Heart left ventricle (tissue), 16 donors: ENCODE measurements at regions of chr15 and their contacts with region 1.

Region 1: GRCh38 chr15:64067564-64068030 is 21.3 kb upstream of the DAPK2 start:
- DNase-seq: peak in 4 of 5 donors; percentile 51 to 60 (median 54)
- ATAC-seq: peak; percentile 60 to 79 (median 77)
- H3K4me3 ChIP-seq: no peak overlapping the region
- H3K27ac ChIP-seq: no peak overlapping the region
- H3K4me1 ChIP-seq: peaks cover 3 to 51% (median 18%) of the 10 kb centered on the region in 12 donors
- H3K27me3 ChIP-seq: no peaks in the 10 kb centered on the region
- CTCF ChIP-seq: peak; percentile 71 to 88 (median 83)
- POLR2A ChIP-seq: no peak

Region 2: DNA sequence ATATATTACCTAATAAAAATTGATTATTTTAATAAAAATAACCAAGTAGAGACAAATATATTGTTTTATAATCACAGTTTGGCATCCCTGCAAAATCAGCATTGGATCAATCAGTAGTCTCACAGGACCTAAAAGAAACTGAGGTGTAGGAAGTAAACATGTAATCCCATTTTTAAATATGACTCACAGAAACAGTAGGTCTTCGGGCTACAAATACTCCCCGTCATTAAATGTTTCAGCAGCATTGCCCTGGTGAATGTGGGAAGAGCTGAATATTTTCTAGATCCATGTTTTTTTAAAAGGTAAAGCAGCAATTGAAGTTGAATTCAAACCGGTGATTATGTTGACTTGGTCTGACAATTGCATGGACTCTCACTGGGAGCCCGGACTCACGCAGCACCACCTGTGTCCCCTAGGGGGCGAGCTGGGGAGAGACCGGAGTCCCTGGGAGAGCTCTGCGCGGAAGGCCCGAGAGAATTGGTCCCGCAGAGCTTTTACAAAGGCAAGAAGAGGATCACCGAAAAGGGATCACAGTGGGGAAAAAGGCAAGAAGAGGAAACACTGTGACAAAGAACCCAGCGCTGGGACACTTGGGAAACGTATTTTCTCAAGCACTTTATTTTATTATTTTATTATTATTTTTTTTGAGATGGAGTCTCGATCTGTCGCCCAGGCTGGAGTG is 580.4 kb before region 1 on chr15:
- intact Hi-C with region 1: loop called in 1 of 10 experiments (anchors 10 kb)
- DNase-seq: peak; percentile 86 to 95 (median 88)
- ATAC-seq: peak; percentile 88 to 95 (median 92)
- H3K4me3 ChIP-seq: peak overlapping the region in 2 of 12 donors; percentile 5 to 19
- H3K27ac ChIP-seq: peak overlapping the region in 1 of 12 donors; percentile 66
- H3K4me1 ChIP-seq: peaks cover 0 to 66% (median 0%) of the 10 kb centered on the region in 12 donors
- H3K27me3 ChIP-seq: no peaks in the 10 kb centered on the region
- CTCF ChIP-seq: peak; percentile 88 to 97 (median 95)
- POLR2A ChIP-seq: no peak

Region 3: DNA sequence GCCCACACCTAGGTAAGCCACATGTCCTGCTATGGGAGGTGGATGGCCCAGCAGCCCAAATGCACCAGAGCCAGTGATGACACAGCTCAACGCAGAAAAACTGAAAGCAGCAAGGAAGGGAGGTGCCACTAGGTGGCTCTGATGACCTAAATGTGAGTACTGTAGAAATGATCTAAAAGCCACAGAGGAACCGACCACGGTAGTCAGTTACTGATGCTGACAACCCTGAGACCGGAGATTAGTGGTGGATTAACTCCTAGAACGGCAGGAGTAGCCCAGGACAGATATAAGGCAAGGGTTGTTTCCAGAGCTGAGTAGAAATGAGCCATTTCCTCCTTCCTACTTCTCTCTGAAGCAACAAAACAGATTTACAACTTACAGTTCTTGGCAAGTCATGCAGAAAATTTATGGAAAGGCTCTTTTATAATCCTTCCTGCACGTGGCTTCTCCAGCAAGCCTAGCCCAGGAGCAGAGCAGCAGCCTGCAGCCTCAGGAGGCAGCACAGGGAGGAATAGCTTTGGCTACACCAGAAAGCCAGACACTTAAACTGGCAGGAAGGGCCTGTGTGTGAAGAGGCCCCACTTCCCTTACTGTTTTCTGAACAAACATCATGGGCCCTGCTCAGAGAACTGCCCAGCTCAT is 457.3 kb before region 1 on chr15:
- intact Hi-C with region 1: loop called in 2 of 10 experiments (anchors 5 to 10 kb)
- DNase-seq: peak in 4 of 5 donors; percentile 38 to 65 (median 52)
- ATAC-seq: peak; percentile 59 to 76 (median 75)
- H3K4me3 ChIP-seq: no peak overlapping the region
- H3K27ac ChIP-seq: peak overlapping the region in 9 of 12 donors; percentile 22 to 80 (median 33)
- H3K4me1 ChIP-seq: peaks cover 0 to 35% (median 10%) of the 10 kb centered on the region in 12 donors
- H3K27me3 ChIP-seq: no peaks in the 10 kb centered on the region
- CTCF ChIP-seq: peak; percentile 36 to 72 (median 59)
- POLR2A ChIP-seq: no peak

Region 4: GRCh38 chr15:63626955-63627354 is 440.6 kb before region 1 on chr15:
- intact Hi-C with region 1: loop called in 1 of 10 experiments (anchors 10 kb)
- DNase-seq: no peak
- ATAC-seq: no peak
- H3K4me3 ChIP-seq: no peak overlapping the region
- H3K27ac ChIP-seq: no peak overlapping the region
- H3K4me1 ChIP-seq: no peaks in the 10 kb centered on the region
- H3K27me3 ChIP-seq: no peaks in the 10 kb centered on the region
- CTCF ChIP-seq: no peak
- POLR2A ChIP-seq: no peak

Region 5: DNA sequence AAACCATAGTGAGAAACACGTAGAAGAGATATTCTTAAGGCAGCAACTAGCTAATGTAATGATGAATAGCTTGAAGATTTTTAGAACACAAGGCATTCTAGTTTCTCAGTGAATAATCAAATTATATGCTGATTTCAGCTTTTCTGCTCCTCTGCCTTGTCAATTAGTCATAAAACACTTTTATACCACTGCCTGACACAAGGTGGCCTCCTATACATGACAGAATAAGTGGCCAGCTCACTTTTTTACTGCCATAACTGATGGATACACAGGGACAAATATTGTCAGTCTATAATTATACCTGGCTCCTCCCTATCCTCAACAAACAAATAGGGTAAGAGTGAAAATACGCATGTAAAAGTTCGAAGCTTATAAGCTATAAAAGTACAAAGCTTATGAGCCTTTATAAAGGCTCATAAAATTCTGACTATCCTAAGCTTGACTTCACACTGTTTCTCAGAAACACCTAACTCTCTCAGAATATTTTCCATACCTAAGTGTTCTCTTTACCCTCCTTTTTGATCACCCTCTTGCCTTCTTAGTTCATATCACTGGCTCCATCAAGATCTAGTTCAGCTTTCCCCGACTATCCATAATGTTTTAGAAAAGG is 315.4 kb before region 1 on chr15:
- intact Hi-C with region 1: loop called (anchors 1 to 5 kb)
- DNase-seq: peak in 2 of 5 donors; percentile 25 to 36
- ATAC-seq: peak in 3 of 4 donors; percentile 78 to 90 (median 85)
- H3K4me3 ChIP-seq: no peak overlapping the region
- H3K27ac ChIP-seq: no peak overlapping the region
- H3K4me1 ChIP-seq: peaks cover 0 to 3% (median 0%) of the 10 kb centered on the region in 12 donors
- H3K27me3 ChIP-seq: no peaks in the 10 kb centered on the region
- CTCF ChIP-seq: peak; percentile 45 to 84 (median 74)
- POLR2A ChIP-seq: no peak